ENCODE measurements at regions of chr5 and their contacts with region 1.

Region 1: GRCh38 chr5:136042665-136043121 is 13.9 kb downstream of the TGFBI start:
- DNase-seq: no peak
- H3K4me3 Mint-ChIP-seq: no peak overlapping the region
- H3K27ac Mint-ChIP-seq: no peak overlapping the region
- H3K4me1 Mint-ChIP-seq: peaks cover 10% of the 10 kb centered on the region
- H3K27me3 Mint-ChIP-seq: peaks cover 6% of the 10 kb centered on the region

Region 2: DNA sequence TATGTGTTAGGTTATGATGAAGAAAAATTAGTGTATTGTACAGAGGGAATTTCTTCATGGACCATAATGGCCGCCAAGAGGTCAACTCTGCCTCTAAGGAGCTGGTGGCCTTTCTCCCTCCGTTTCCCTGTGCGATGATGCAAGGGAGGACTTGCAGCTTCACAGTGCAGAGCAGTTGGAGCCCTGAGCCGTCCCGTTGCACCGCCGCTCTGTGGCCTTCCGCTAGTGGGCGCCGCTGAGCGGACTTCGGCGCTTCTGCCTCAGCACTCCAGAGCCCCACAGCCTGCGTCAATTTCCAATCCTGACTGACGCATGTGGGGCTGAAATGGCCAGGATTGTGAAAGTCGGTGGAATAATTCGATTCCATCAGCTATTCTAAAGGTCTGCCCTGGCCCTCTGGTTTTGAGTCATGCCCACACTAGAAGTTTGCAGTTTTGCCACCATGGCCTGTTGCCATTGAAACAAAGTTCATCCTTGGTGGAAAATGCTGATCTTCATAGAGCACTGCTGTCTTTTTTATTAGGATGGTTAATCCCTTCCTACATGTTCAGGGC is 65.2 kb before region 1 on chr5:
- intact Hi-C with region 1: loop called (anchors 5 kb)
- DNase-seq: peak; percentile 47
- H3K4me3 Mint-ChIP-seq: no peak overlapping the region
- H3K27ac Mint-ChIP-seq: no peak overlapping the region
- H3K4me1 Mint-ChIP-seq: no peaks in the 10 kb centered on the region
- H3K27me3 Mint-ChIP-seq: peaks cover 29% of the 10 kb centered on the region

Region 3: DNA sequence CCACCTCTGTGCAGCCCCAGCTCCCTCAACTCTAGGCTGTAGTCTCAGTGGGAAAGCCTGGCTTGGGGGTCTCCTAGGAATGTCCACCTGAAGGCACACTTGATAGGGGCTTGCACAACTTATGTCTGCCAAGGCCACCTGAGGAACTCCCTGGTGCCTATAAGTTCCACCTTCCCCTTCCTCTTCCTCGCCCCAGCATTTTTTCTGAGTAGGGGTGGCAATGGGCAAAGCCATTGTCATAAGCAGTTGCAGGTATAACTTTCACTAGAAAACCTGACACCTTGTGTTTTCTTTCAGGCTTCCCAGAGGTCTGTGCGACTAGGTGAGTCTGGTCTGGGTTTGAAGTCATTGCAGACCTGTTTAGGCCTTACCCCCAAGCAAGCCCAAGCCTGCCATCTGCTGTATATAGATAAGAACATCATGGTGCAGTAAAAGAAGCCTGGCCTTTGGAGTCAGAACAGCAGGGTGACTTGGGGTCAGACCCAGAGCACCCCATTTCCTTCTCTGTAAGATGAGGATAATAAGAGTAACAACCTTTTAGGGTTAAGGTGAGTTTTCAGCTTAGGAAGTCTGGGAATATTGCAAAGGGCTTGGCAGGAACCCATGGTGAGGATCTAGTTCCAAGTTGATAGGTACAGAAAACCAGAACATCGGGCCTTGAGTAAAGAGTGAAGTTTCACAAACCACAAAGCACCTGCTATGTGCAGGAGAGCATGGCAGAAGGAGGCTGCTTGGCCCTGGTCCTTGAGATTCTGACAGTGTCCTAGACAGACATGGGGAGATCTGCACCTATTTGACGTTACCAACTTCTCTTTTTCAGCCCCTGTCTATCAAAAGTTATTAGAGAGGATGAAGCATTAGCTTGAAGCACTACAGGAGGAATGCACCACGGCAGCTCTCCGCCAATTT is 19.9 kb after region 1 on chr5:
- intact Hi-C with region 1: no loop called
- DNase-seq: no peak
- H3K4me3 Mint-ChIP-seq: no peak overlapping the region
- H3K27ac Mint-ChIP-seq: no peak overlapping the region
- H3K4me1 Mint-ChIP-seq: no peaks in the 10 kb centered on the region
- H3K27me3 Mint-ChIP-seq: peaks cover 7% of the 10 kb centered on the region

Measured in activated T-helper 2 cell treated with anti-CD3 and anti-CD28 coated beads, Interferon-gamma antibody, Interleukin-2, Interleukin-4, amounts not matched to agents 10 μg/mL and 5 μg/mL and 100 μg/mL, durations not matched to agents 14 hours and 24 hours and 36 hours (primary cell).